GM12878 (cell line): ENCODE measurements at regions of chr1 and their contacts with region 1.

Region 1: DNA sequence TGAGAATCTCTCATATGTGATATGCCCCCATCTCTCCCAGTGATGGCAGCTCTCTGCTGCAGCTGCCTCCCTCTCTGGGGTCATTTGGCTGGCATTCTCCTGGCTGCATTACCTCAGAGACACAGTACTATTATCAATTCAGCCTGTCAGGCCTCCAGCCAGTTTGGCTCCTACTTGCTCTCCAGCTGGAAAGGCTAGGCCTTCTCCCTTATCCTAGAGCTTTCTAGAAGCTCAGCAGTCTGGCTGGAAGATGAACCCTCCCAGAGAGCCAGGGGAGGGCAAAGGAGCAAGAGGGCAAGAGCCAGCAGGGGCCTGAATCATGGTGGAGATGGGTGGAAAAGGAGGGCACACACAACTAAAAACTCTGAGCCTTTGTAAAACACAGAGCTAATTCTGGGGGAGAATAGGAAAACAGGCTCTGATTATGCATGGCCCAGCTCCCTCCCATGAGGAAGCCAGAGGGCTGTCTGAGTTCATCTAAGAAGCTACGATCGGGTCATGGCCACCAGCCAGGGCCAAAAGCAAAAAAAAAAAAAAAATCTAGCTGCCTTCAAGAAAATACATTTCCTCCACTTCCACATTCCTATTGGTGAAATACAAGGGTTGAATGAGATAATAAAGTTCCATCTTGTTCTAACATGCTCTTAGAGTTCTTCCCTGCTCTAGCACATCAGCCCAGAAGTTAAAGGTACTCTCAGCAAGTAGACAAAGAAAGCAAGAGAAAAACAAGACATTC is 8.8 kb downstream of the LAMB3 start:
- DNase-seq: no peak
- ATAC-seq: no peak
- H3K4me3 ChIP-seq: no peak overlapping the region
- H3K27ac ChIP-seq: no peak overlapping the region
- H3K4me1 ChIP-seq: no peaks in the 10 kb centered on the region
- H3K27me3 ChIP-seq: no peaks in the 10 kb centered on the region; a peak in 1 of 4 replicates
- CTCF ChIP-seq: no peak
- EP300 ChIP-seq: no peak
- POLR2A ChIP-seq: no peak
- RAD21 ChIP-seq: no peak

Region 2: GRCh38 chr1:209416039-209416438 is 227.4 kb before region 1 on chr1:
- CTCF ChIA-PET with region 1: no interaction called
- POLR2A ChIA-PET with region 1: no interaction called
- RAD21 ChIA-PET with region 1: no interaction called
- SMC1A ChIA-PET with region 1: no interaction called
- in situ Hi-C with region 1: no loop called
- intact Hi-C with region 1: no loop called
- DNase-seq: no peak
- ATAC-seq: no peak
- H3K4me3 ChIP-seq: no peak overlapping the region
- H3K27ac ChIP-seq: no peak overlapping the region
- H3K4me1 ChIP-seq: no peaks in the 10 kb centered on the region
- H3K27me3 ChIP-seq: peaks cover 0 to 4% of the 10 kb centered on the region in 2 experiments; a peak in 1 of 4 replicates
- CTCF ChIP-seq: no peak
- EP300 ChIP-seq: no peak
- POLR2A ChIP-seq: no peak
- RAD21 ChIP-seq: no peak

Region 3: GRCh38 chr1:209490013-209490412 is 153.4 kb before region 1 on chr1:
- CTCF ChIA-PET with region 1: no interaction called
- POLR2A ChIA-PET with region 1: no interaction called
- RAD21 ChIA-PET with region 1: no interaction called
- SMC1A ChIA-PET with region 1: no interaction called
- in situ Hi-C with region 1: no loop called
- intact Hi-C with region 1: no loop called
- DNase-seq: no peak
- ATAC-seq: no peak
- H3K4me3 ChIP-seq: no peak overlapping the region
- H3K27ac ChIP-seq: no peak overlapping the region
- H3K4me1 ChIP-seq: no peaks in the 10 kb centered on the region
- H3K27me3 ChIP-seq: no peaks in the 10 kb centered on the region
- CTCF ChIP-seq: no peak
- EP300 ChIP-seq: no peak
- POLR2A ChIP-seq: no peak
- RAD21 ChIP-seq: no peak

Region 4: DNA sequence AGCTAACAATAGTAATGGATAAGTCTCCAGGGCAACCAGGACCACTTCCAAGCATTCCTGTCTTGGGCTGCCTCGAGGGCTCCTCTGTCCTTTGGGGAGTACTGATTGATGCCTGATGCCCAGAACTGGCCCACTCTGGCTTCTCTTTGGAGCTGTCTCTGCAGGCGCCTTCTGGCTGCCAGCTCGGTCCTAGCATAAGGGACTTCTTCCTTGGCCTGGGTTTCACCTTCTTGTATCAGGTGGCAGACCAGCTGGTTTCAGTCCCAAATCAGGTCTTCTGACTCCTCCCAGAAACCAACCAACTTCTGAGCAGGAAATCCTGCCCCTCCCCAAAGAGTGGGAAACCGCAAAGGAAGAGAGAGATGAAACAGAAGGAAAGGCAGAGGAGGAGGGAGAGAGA is 42.4 kb after region 1 on chr1:
- CTCF ChIA-PET with region 1: interaction called, 13 read pairs
- POLR2A ChIA-PET with region 1: interaction called, 3 read pairs
- RAD21 ChIA-PET with region 1: interaction called, 8 read pairs
- SMC1A ChIA-PET with region 1: interaction called, 128 read pairs
- in situ Hi-C with region 1: no loop called
- intact Hi-C with region 1: loop called (anchors 5 kb)
- DNase-seq: no peak
- ATAC-seq: peak; percentile 88
- H3K4me3 ChIP-seq: no peak overlapping the region
- H3K27ac ChIP-seq: no peak overlapping the region
- H3K4me1 ChIP-seq: no peaks in the 10 kb centered on the region
- H3K27me3 ChIP-seq: no peaks in the 10 kb centered on the region
- CTCF ChIP-seq: no peak
- EP300 ChIP-seq: no peak
- POLR2A ChIP-seq: no peak
- RAD21 ChIP-seq: no peak